ENCODE measurements at regions of chr1 and their contacts with region 1.

Region 1: GRCh38 chr1:195511501-195511900 is 1096.7 kb downstream of the KCNT2 start:
- DNase-seq: no peak
- ATAC-seq: no peak
- H3K4me3 Mint-ChIP-seq: no peak overlapping the region
- H3K27ac Mint-ChIP-seq: no peak overlapping the region
- H3K4me1 Mint-ChIP-seq: no peaks in the 10 kb centered on the region
- H3K27me3 Mint-ChIP-seq: no peaks in the 10 kb centered on the region

Region 2: GRCh38 chr1:195152475-195152874 is 359.0 kb before region 1 on chr1:
- CTCF ChIA-PET with region 1: no interaction called
- POLR2A ChIA-PET with region 1: no interaction called
- intact Hi-C with region 1: no loop called
- DNase-seq: no peak
- ATAC-seq: no peak
- H3K4me3 Mint-ChIP-seq: no peak overlapping the region
- H3K27ac Mint-ChIP-seq: no peak overlapping the region
- H3K4me1 Mint-ChIP-seq: no peaks in the 10 kb centered on the region
- H3K27me3 Mint-ChIP-seq: no peaks in the 10 kb centered on the region

Region 3: DNA sequence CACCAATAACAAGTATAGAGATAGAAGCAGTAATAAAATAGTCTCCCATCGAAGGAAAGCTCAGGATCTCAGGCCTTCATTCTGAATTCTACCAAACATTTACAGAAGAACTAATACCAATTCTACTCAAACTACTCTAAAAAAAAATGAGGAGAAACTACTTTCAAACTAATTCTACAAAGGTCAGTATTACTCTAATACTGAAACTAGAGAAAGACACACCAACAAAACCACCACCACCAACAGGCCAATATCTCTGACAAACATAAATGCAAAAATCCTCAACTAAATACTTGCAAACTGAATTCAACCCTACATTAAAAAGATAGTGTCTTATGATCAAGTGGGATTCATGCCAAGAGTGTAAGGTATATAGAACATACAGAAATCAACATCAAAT is 18.4 kb after region 1 on chr1:
- CTCF ChIA-PET with region 1: no interaction called
- POLR2A ChIA-PET with region 1: no interaction called
- intact Hi-C with region 1: loop called in 1 of 2 experiments (anchors 2 kb)
- DNase-seq: no peak
- ATAC-seq: no peak
- H3K4me3 Mint-ChIP-seq: no peak overlapping the region
- H3K27ac Mint-ChIP-seq: no peak overlapping the region
- H3K4me1 Mint-ChIP-seq: no peaks in the 10 kb centered on the region
- H3K27me3 Mint-ChIP-seq: no peaks in the 10 kb centered on the region

Region 4: DNA sequence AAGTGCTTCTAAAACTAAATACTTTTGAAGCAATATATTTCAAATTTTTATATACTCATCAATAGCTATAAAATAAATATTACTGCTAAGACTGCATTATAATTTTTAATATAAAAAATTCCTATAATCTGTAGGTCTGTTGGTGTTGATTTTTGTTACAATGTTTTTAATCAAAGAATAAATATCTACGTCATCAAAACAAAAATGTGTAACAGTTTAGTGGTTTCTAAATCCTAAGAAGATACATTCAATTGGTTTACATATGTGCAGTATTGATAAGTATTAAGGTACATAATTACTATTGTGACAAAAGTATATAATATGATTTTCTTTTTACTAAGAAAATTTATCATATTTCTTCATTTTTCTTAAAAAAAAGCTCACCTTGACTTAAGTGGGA is 28.9 kb after region 1 on chr1:
- CTCF ChIA-PET with region 1: no interaction called
- POLR2A ChIA-PET with region 1: no interaction called
- intact Hi-C with region 1: no loop called
- DNase-seq: no peak
- ATAC-seq: no peak
- H3K4me3 Mint-ChIP-seq: no peak overlapping the region
- H3K27ac Mint-ChIP-seq: no peak overlapping the region
- H3K4me1 Mint-ChIP-seq: no peaks in the 10 kb centered on the region
- H3K27me3 Mint-ChIP-seq: no peaks in the 10 kb centered on the region

Measured in activated CD4-positive, alpha-beta T cell treated with anti-CD3 and anti-CD28 coated beads for 36 hours (primary cell).